CD4-positive, alpha-beta memory T cell (primary cell): ENCODE measurements at regions of chr10 and their contacts with region 1.

Region 1: GRCh38 chr10:113385021-113385999 is 167.5 kb upstream of the HABP2 start:
- DNase-seq: peak; percentile 49 to 61 (median 57)
- H3K4me3 ChIP-seq: no peak overlapping the region
- H3K4me3 Mint-ChIP-seq: peak overlapping the region in 7 of 8 donors; percentile 17 to 77 (median 54)
- H3K27ac ChIP-seq: no peak overlapping the region
- H3K27ac Mint-ChIP-seq: peak overlapping the region in 2 of 7 donors; percentile 35 to 68
- H3K4me1 ChIP-seq: peaks cover 11% of the 10 kb centered on the region
- H3K4me1 Mint-ChIP-seq: peaks cover 16 to 29% (median 22%) of the 10 kb centered on the region in 4 donors
- H3K27me3 ChIP-seq: no peaks in the 10 kb centered on the region
- H3K27me3 Mint-ChIP-seq: peaks cover 3 to 5% of the 10 kb centered on the region in 2 donors

Region 2: GRCh38 chr10:112471878-112472487 is 913.3 kb before region 1 on chr10:
- CTCF ChIA-PET with region 1: interaction called, 13 read pairs
- POLR2A ChIA-PET with region 1: no interaction called
- intact Hi-C with region 1: loop called (anchors 1 kb)
- DNase-seq: peak in 4 of 5 donors; percentile 28 to 41 (median 34)
- H3K4me3 ChIP-seq: no peak overlapping the region
- H3K4me3 Mint-ChIP-seq: no peak overlapping the region
- H3K27ac ChIP-seq: no peak overlapping the region
- H3K27ac Mint-ChIP-seq: peak overlapping the region in 5 of 7 donors; percentile 1 to 77 (median 9)
- H3K4me1 ChIP-seq: no peaks in the 10 kb centered on the region
- H3K4me1 Mint-ChIP-seq: peaks cover 12 to 15% (median 13%) of the 10 kb centered on the region in 4 donors
- H3K27me3 ChIP-seq: no peaks in the 10 kb centered on the region
- H3K27me3 Mint-ChIP-seq: no peaks in the 10 kb centered on the region

Region 3: DNA sequence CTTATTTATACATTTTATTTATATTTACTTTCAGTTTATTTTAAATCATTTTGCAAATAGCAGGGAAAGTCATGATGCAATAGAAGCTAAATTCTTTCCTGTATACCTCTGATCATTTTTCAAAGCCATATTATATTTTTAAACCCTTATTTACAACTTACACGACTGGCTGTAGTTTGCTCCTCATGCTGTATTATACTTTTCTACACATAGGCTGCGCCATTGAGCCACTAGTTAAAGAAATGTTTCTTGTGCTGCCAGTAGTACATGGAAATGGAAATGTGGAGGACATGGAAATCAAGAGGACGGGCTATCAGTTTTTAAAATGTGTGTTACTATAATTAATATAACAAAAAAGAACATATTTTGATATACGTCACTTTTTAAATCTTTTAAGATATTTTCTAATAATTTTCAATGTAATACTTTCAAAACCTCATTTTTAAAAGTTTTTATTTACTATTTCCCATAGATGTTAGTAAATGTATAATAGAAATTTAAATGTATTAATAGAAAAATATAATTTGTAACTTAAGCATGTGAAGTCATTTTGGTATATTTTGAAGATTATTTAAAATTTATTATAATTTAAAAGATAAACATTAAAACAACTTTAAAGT is 819.8 kb before region 1 on chr10:
- CTCF ChIA-PET with region 1: no interaction called
- POLR2A ChIA-PET with region 1: no interaction called
- intact Hi-C with region 1: loop called (anchors 10 kb)
- DNase-seq: peak in 2 of 5 donors; percentile 2 to 8
- H3K4me3 ChIP-seq: no peak overlapping the region
- H3K4me3 Mint-ChIP-seq: no peak overlapping the region
- H3K27ac ChIP-seq: no peak overlapping the region
- H3K27ac Mint-ChIP-seq: no peak overlapping the region
- H3K4me1 ChIP-seq: no peaks in the 10 kb centered on the region
- H3K4me1 Mint-ChIP-seq: peaks cover 0 to 1% (median 0%) of the 10 kb centered on the region in 4 donors
- H3K27me3 ChIP-seq: no peaks in the 10 kb centered on the region
- H3K27me3 Mint-ChIP-seq: no peaks in the 10 kb centered on the region

Region 4: GRCh38 chr10:112721080-112721698 is 664.1 kb before region 1 on chr10:
- CTCF ChIA-PET with region 1: interaction called, 50 read pairs
- POLR2A ChIA-PET with region 1: no interaction called
- intact Hi-C with region 1: no loop called
- DNase-seq: peak in 4 of 5 donors; percentile 4 to 15 (median 12)
- H3K4me3 ChIP-seq: no peak overlapping the region
- H3K4me3 Mint-ChIP-seq: no peak overlapping the region
- H3K27ac ChIP-seq: no peak overlapping the region
- H3K27ac Mint-ChIP-seq: no peak overlapping the region
- H3K4me1 ChIP-seq: no peaks in the 10 kb centered on the region
- H3K4me1 Mint-ChIP-seq: peaks cover 0 to 3% (median 0%) of the 10 kb centered on the region in 4 donors
- H3K27me3 ChIP-seq: no peaks in the 10 kb centered on the region
- H3K27me3 Mint-ChIP-seq: no peaks in the 10 kb centered on the region

Region 5: GRCh38 chr10:112949875-112950507 is 435.3 kb before region 1 on chr10 and contains the start of gene TCF7L2:
- CTCF ChIA-PET with region 1: no interaction called
- POLR2A ChIA-PET with region 1: interaction called, 3 read pairs
- intact Hi-C with region 1: loop called (anchors 5 kb)
- DNase-seq: peak; percentile 46 to 78 (median 57)
- H3K4me3 ChIP-seq: peak within 1 kb of the TSS; percentile 57 to 63
- H3K4me3 Mint-ChIP-seq: peak within 1 kb of the TSS; percentile 94 to 100 (median 96)
- H3K27ac ChIP-seq: peak within 1 kb of the TSS; percentile 6
- H3K27ac Mint-ChIP-seq: peak within 1 kb of the TSS; percentile 84 to 97 (median 92)
- H3K4me1 ChIP-seq: peaks cover 24% of the 10 kb centered on the region
- H3K4me1 Mint-ChIP-seq: peaks cover 14 to 45% (median 15%) of the 10 kb centered on the region in 4 donors
- H3K27me3 ChIP-seq: peaks cover 9% of the 10 kb centered on the region
- H3K27me3 Mint-ChIP-seq: peaks cover 14 to 15% of the 10 kb centered on the region in 2 donors
- total RNA-seq, gene TCF7L2: 2.3 to 3.2 TPM

Region 6: DNA sequence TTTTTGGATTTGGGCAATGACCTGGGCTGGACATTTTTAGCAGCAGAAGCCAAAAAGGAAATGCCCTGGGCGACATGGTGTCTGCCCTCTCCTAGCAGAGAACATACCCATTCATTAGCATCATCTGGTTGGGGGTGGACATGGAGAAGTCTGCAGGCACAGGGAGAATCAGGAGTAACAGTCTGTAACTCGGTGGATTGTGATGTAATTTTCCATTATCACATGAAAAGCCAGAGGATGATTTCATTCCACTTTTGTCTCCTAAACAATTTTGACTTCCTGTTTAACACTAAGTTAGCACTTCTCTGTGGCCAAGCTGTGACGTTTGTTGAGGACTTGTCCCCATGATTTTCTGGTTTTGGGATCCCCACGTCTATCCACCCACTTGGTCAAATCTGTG is 13.8 kb after region 1 on chr10:
- CTCF ChIA-PET with region 1: interaction called, 11 read pairs
- POLR2A ChIA-PET with region 1: no interaction called
- intact Hi-C with region 1: no loop called
- DNase-seq: no peak
- H3K4me3 ChIP-seq: no peak overlapping the region
- H3K4me3 Mint-ChIP-seq: no peak overlapping the region
- H3K27ac ChIP-seq: no peak overlapping the region
- H3K27ac Mint-ChIP-seq: no peak overlapping the region
- H3K4me1 ChIP-seq: no peaks in the 10 kb centered on the region
- H3K4me1 Mint-ChIP-seq: no peaks in the 10 kb centered on the region
- H3K27me3 ChIP-seq: no peaks in the 10 kb centered on the region
- H3K27me3 Mint-ChIP-seq: peaks cover 1 to 2% of the 10 kb centered on the region in 2 donors